SK-N-SH (cell line): ENCODE measurements at regions of chr22 and their contacts with region 1.

Region 1: DNA sequence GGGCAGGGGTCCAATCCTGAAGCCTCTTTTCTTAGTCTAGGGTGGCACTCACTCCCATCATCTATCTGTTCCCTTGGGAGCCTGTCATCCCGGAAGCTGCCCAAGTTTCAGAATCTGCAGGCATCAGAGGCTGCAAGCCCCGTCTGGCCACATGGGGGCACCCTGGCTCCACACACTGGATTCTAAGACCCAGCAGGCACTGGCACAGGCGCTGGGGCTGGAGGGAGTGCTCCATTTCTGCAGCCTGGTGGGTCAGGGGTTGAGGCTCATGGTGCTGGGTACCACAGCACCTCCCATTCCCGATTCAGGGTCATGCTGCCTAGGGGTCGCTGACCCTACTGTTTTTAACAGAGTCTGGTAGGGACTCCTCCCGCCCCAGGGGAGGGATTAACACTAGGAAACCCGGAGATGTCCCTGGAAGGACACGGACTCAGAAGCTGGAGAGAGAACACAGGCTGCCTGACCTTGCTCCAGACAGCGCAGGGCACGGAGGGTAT is 243.9 kb upstream of the SYN3 start:
- DNase-seq: peak; percentile 81
- H3K4me3 ChIP-seq: peak overlapping the region in 1 of 2 experiments; percentile 41; a peak in 1 of 4 replicates
- H3K27ac ChIP-seq: no peak overlapping the region
- H3K4me1 ChIP-seq: no peaks in the 10 kb centered on the region
- H3K27me3 ChIP-seq: no peaks in the 10 kb centered on the region
- CTCF ChIP-seq: peak; percentile 71
- EP300 ChIP-seq: no peak
- RAD21 ChIP-seq: peak; percentile 95

Region 2: DNA sequence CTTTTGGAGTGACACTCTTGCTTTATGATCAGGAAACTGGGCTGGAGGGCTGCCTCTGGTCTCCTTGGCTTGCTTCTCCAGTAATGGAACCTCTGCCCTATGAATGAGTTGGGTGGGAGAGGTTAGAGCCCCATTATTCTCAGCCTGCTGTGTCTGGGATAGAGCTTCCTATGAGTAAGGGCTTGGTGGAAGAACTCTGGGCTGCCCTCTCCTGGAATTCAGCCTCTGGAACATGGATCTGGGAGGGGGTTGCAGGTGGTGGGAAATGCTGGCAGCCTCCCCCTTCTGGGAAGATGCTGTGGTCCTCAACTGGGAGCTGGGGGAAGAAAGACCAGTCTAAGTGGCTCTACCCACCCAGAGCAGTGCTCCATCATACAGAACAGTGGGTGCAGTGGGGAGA is 162.2 kb before region 1 on chr22:
- CTCF ChIA-PET with region 1: no interaction called
- POLR2A ChIA-PET with region 1: no interaction called
- DNase-seq: no peak
- H3K4me3 ChIP-seq: no peak overlapping the region
- H3K27ac ChIP-seq: no peak overlapping the region
- H3K4me1 ChIP-seq: no peaks in the 10 kb centered on the region
- H3K27me3 ChIP-seq: no peaks in the 10 kb centered on the region
- CTCF ChIP-seq: no peak
- EP300 ChIP-seq: no peak
- RAD21 ChIP-seq: no peak

Region 3: GRCh38 chr22:33240888-33241475 is 61.1 kb before region 1 on chr22:
- CTCF ChIA-PET with region 1: no interaction called
- POLR2A ChIA-PET with region 1: no interaction called
- DNase-seq: no peak
- H3K4me3 ChIP-seq: no peak overlapping the region
- H3K27ac ChIP-seq: no peak overlapping the region
- H3K4me1 ChIP-seq: no peaks in the 10 kb centered on the region
- H3K27me3 ChIP-seq: no peaks in the 10 kb centered on the region
- CTCF ChIP-seq: no peak
- EP300 ChIP-seq: no peak
- RAD21 ChIP-seq: no peak

Region 4: DNA sequence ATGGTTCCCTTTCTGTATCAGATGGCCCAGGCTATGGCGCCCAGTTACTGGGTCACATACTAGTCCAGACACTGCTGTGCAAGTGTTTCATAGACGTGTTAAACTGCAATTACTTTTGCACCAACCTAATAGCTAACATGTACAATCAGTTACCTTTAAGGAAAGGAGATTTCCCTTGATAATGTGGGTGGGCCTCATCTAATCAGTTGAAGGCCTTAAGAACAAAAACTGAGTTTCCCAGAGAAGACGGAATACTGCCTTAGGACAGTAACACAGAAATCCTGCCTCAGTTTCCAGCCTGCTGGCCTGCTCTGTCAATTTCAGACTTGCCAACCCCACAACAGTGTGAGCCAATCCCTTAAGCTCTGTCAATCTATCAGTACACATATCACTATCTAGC is 14.0 kb before region 1 on chr22:
- CTCF ChIA-PET with region 1: interaction called, 29 read pairs
- POLR2A ChIA-PET with region 1: no interaction called
- DNase-seq: no peak
- H3K4me3 ChIP-seq: no peak overlapping the region
- H3K27ac ChIP-seq: no peak overlapping the region
- H3K4me1 ChIP-seq: no peaks in the 10 kb centered on the region
- H3K27me3 ChIP-seq: no peaks in the 10 kb centered on the region
- CTCF ChIP-seq: no peak
- EP300 ChIP-seq: no peak
- RAD21 ChIP-seq: no peak

Region 5: DNA sequence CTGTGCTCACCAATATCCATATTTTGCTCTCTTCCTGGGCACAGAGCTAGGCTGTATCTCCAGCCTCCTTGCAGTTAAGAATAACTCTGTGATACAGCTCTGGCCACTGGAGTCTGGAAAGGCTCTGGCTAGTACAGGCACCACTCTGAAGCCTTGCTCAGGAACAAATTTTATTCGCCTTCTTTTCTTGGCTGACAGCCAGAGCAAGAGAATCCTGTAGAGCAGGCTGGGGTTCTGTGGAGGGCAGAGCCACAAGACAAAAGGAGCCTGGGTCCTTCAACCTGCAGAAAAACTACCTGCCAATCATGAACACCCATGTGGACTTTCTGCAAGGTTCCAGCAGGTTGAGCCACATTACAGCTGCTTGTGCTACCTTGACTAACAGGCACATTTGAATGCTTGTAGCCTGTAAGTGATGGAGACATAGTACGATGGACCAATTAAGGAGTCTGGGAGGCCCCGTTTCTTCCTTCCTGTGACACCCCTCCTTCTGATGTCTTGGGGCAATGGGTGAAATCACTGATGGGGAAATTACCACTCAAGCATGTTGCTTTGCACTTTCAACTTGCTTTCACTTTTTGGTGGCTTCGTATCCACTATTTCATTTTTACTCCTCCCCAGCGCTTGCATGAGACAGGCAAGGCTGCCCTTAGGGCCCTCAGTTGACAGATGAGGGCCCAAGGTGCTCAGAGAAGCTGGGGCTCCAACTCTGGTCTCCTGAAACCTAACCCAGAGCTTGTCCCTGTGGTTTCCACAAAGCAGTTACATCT is 23.3 kb after region 1 on chr22:
- CTCF ChIA-PET with region 1: interaction called, 47 read pairs
- POLR2A ChIA-PET with region 1: no interaction called
- DNase-seq: no peak
- H3K4me3 ChIP-seq: no peak overlapping the region
- H3K27ac ChIP-seq: no peak overlapping the region
- H3K4me1 ChIP-seq: no peaks in the 10 kb centered on the region; a peak in 1 of 4 replicates
- H3K27me3 ChIP-seq: no peaks in the 10 kb centered on the region
- CTCF ChIP-seq: no peak
- EP300 ChIP-seq: no peak
- RAD21 ChIP-seq: no peak

Region 6: GRCh38 chr22:33579448-33580093 is 277.5 kb after region 1 on chr22:
- CTCF ChIA-PET with region 1: interaction called, 46 read pairs
- POLR2A ChIA-PET with region 1: no interaction called
- DNase-seq: peak; percentile 67
- H3K4me3 ChIP-seq: no peak overlapping the region
- H3K27ac ChIP-seq: no peak overlapping the region
- H3K4me1 ChIP-seq: no peaks in the 10 kb centered on the region
- H3K27me3 ChIP-seq: no peaks in the 10 kb centered on the region
- CTCF ChIP-seq: peak; percentile 55
- EP300 ChIP-seq: no peak
- RAD21 ChIP-seq: peak; percentile 83

Region 7: DNA sequence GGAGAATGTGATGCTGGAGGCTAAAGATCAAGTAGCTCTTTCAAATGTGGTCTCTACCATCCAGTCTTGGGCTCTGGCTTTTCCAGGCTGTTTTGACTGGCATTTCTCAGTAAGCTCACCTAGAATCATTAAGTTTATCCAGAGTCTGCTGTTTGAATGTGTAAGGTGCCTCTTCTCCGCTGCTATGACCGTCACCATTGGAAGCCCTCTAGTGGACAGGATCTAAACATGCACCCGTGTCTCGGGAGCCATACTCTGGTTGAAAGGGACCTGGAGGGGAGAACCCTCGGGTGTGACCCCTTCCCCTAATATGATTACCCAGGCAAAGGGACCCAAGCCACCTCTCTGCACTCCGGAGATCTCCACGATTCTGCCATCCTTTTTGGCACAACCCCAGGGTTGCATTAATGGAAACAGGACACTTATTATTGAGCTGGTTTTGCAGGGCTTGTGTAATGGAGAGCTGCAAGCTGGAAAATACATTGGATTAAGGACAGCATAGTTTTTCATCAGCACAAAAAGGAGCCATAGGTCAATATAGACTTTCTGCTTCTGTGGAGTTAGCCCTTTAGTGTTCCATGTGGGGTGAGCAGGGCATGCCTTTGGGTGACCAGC is 809.2 kb after region 1 on chr22:
- CTCF ChIA-PET with region 1: interaction called, 24 read pairs
- POLR2A ChIA-PET with region 1: no interaction called
- DNase-seq: peak; percentile 48
- H3K4me3 ChIP-seq: no peak overlapping the region; a peak in 1 of 4 replicates
- H3K27ac ChIP-seq: no peak overlapping the region
- H3K4me1 ChIP-seq: no peaks in the 10 kb centered on the region
- H3K27me3 ChIP-seq: no peaks in the 10 kb centered on the region
- CTCF ChIP-seq: peak; percentile 53
- EP300 ChIP-seq: no peak
- RAD21 ChIP-seq: peak; percentile 53